B cell (primary cell): ENCODE measurements at regions of chr12 and their contacts with region 1.

Region 1: DNA sequence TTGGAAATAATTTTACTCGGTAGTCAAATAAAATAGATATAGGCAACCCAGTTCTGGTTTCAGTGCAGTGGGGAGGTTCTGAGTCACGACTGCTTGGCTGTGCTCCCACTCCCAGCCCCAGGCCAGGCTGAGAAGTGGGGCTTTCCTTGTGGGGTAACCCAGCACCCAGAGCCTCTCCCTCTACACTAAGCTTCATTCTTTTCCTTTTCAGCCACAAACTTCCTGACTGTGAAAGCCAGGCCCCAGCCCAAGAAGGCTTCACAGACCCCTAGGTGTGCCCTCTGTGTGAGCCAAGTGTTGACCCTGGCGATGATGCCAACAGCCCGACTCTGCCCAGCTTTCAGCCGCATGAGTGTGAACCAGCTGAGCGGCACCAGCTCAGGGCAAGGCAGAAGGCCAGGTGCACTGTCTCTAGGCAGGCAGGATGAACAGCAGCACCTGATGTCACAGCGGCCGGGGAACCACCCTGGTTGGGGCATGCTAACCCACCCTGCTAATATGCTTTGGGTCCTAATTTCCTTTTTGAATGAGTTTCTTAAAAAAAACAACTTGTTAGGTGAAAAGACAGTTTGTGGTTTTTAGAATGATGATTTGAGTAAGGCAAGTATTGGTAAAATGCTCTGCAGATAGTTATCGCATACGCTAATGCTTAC is 42.2 kb upstream of the ATP23 start:
- DNase-seq: peak; percentile 93
- ATAC-seq: peak; percentile 82
- H3K4me3 ChIP-seq: peak overlapping the region in 3 of 5 experiments; percentile 29 to 39 (median 34)
- H3K4me3 Mint-ChIP-seq: peak overlapping the region; percentile 88
- H3K27ac ChIP-seq: peak overlapping the region; percentile 96 to 97
- H3K27ac Mint-ChIP-seq: peak overlapping the region; percentile 100
- H3K4me1 ChIP-seq: peaks cover 57 to 60% of the 10 kb centered on the region in 2 donors
- H3K4me1 Mint-ChIP-seq: peaks cover 58% of the 10 kb centered on the region
- H3K27me3 ChIP-seq: no peaks in the 10 kb centered on the region
- H3K27me3 Mint-ChIP-seq: no peaks in the 10 kb centered on the region
- CTCF ChIP-seq: no peak

Region 2: GRCh38 chr12:57803319-57803893 is 95.7 kb before region 1 on chr12:
- CTCF ChIA-PET with region 1: interaction called, 121 read pairs
- POLR2A ChIA-PET with region 1: no interaction called
- intact Hi-C with region 1: no loop called
- DNase-seq: peak; percentile 45
- ATAC-seq: peak; percentile 39
- H3K4me3 ChIP-seq: no peak overlapping the region
- H3K4me3 Mint-ChIP-seq: no peak overlapping the region
- H3K27ac ChIP-seq: no peak overlapping the region
- H3K27ac Mint-ChIP-seq: no peak overlapping the region
- H3K4me1 ChIP-seq: no peaks in the 10 kb centered on the region
- H3K4me1 Mint-ChIP-seq: no peaks in the 10 kb centered on the region
- H3K27me3 ChIP-seq: no peaks in the 10 kb centered on the region
- H3K27me3 Mint-ChIP-seq: no peaks in the 10 kb centered on the region
- CTCF ChIP-seq: peak; percentile 78

Region 3: GRCh38 chr12:57865090-57865751 is 33.9 kb before region 1 on chr12:
- CTCF ChIA-PET with region 1: interaction called, 4 read pairs
- POLR2A ChIA-PET with region 1: no interaction called
- intact Hi-C with region 1: loop called (anchors 2 kb)
- DNase-seq: peak; percentile 55
- ATAC-seq: peak; percentile 76
- H3K4me3 ChIP-seq: peak overlapping the region in 4 of 5 experiments; percentile 31 to 58 (median 51)
- H3K4me3 Mint-ChIP-seq: peak overlapping the region; percentile 93
- H3K27ac ChIP-seq: no peak overlapping the region
- H3K27ac Mint-ChIP-seq: peak overlapping the region; percentile 63
- H3K4me1 ChIP-seq: peaks cover 8 to 10% of the 10 kb centered on the region in 2 donors
- H3K4me1 Mint-ChIP-seq: peaks cover 8% of the 10 kb centered on the region
- H3K27me3 ChIP-seq: peaks cover 0 to 47% (median 23%) of the 10 kb centered on the region in 4 experiments
- H3K27me3 Mint-ChIP-seq: peaks cover 30% of the 10 kb centered on the region
- CTCF ChIP-seq: no peak

Region 4: GRCh38 chr12:57941165-57941894 is 42.2 kb after region 1 on chr12 and contains the start of gene ATP23:
- CTCF ChIA-PET with region 1: interaction called, 4 read pairs
- POLR2A ChIA-PET with region 1: no interaction called
- intact Hi-C with region 1: loop called (anchors 5 kb)
- DNase-seq: peak; percentile 94
- ATAC-seq: peak; percentile 91
- H3K4me3 ChIP-seq: peak within 1 kb of the TSS; percentile 71 to 89 (median 82)
- H3K4me3 Mint-ChIP-seq: peak within 1 kb of the TSS; percentile 99
- H3K27ac ChIP-seq: peak within 1 kb of the TSS; percentile 77 to 91
- H3K27ac Mint-ChIP-seq: peak within 1 kb of the TSS; percentile 97
- H3K4me1 ChIP-seq: peaks cover 15 to 19% of the 10 kb centered on the region in 2 donors
- H3K4me1 Mint-ChIP-seq: peaks cover 28% of the 10 kb centered on the region
- H3K27me3 ChIP-seq: no peaks in the 10 kb centered on the region
- H3K27me3 Mint-ChIP-seq: no peaks in the 10 kb centered on the region
- CTCF ChIP-seq: no peak
- total RNA-seq, gene ATP23: 6.2 and 6.5 TPM in 2 replicates